Activated CD4-positive, alpha-beta T cell treated with anti-CD3 and anti-CD28 coated beads for 36 hours (primary cell): ENCODE measurements at regions of chr11 and their contacts with region 1.

Region 1: GRCh38 chr11:48001438-48002021 is 21.2 kb downstream of the PTPRJ start:
- DNase-seq: peak; percentile 90
- ATAC-seq: peak; percentile 86
- H3K4me3 Mint-ChIP-seq: peak overlapping the region; percentile 59
- H3K27ac Mint-ChIP-seq: peak overlapping the region; percentile 98
- H3K4me1 Mint-ChIP-seq: peaks cover 85% of the 10 kb centered on the region
- H3K27me3 Mint-ChIP-seq: no peaks in the 10 kb centered on the region

Region 2: GRCh38 chr11:46121724-46122477 is 1879.6 kb before region 1 on chr11:
- CTCF ChIA-PET with region 1: no interaction called
- POLR2A ChIA-PET with region 1: no interaction called
- intact Hi-C with region 1: loop called in 1 of 2 experiments (anchors 10 kb)
- DNase-seq: peak; percentile 83
- ATAC-seq: peak; percentile 39
- H3K4me3 Mint-ChIP-seq: peak overlapping the region; percentile 81
- H3K27ac Mint-ChIP-seq: peak overlapping the region; percentile 86
- H3K4me1 Mint-ChIP-seq: peaks cover 41% of the 10 kb centered on the region
- H3K27me3 Mint-ChIP-seq: no peaks in the 10 kb centered on the region

Region 3: DNA sequence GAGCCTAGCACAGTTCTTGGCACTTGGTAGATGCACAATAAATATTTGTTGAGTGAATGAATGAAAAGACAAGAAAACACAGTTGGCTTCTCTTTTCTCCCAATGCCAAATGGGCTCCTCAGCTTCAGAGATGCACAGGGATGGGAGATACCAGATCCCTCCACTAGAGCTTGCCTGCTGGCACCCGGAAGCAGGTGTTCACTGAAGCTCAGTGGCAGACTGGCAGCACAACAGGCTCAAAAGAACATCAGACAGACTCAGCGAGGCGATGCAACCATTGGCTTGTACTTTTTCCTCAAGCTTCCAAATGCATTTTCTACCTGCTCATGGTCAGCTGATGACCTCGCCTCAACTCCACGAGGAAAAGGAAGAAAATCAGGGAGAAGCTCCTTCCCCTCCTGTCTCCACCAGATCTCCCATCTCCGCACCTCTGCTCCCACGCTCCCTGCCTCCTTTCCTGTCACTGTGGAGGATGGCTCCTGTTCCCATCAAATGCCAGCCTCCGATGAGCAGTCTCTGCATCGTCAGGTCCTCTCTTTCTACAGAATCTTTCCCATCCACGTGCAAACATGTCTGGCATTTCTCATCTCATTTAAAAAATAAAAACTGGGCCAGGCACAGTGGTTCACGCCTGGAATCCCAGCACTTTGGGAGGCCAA is 558.4 kb before region 1 on chr11:
- CTCF ChIA-PET with region 1: no interaction called
- POLR2A ChIA-PET with region 1: no interaction called
- intact Hi-C with region 1: no loop called
- DNase-seq: no peak
- ATAC-seq: peak; percentile 53
- H3K4me3 Mint-ChIP-seq: no peak overlapping the region
- H3K27ac Mint-ChIP-seq: no peak overlapping the region
- H3K4me1 Mint-ChIP-seq: no peaks in the 10 kb centered on the region
- H3K27me3 Mint-ChIP-seq: no peaks in the 10 kb centered on the region

Region 4: GRCh38 chr11:47514825-47515647 is 486.5 kb before region 1 on chr11:
- CTCF ChIA-PET with region 1: no interaction called
- POLR2A ChIA-PET with region 1: no interaction called
- intact Hi-C with region 1: loop called in 1 of 2 experiments (anchors 10 kb)
- DNase-seq: peak; percentile 69
- ATAC-seq: peak; percentile 95
- H3K4me3 Mint-ChIP-seq: peak overlapping the region; percentile 0
- H3K27ac Mint-ChIP-seq: peak overlapping the region; percentile 84
- H3K4me1 Mint-ChIP-seq: peaks cover 89% of the 10 kb centered on the region
- H3K27me3 Mint-ChIP-seq: no peaks in the 10 kb centered on the region

Region 5: GRCh38 chr11:47672283-47672730 is 329.2 kb before region 1 on chr11:
- CTCF ChIA-PET with region 1: no interaction called
- POLR2A ChIA-PET with region 1: no interaction called
- intact Hi-C with region 1: no loop called
- DNase-seq: no peak
- ATAC-seq: no peak
- H3K4me3 Mint-ChIP-seq: no peak overlapping the region
- H3K27ac Mint-ChIP-seq: no peak overlapping the region
- H3K4me1 Mint-ChIP-seq: peaks cover 4% of the 10 kb centered on the region
- H3K27me3 Mint-ChIP-seq: no peaks in the 10 kb centered on the region

Region 6: GRCh38 chr11:47863189-47863892 is 138.2 kb before region 1 on chr11:
- CTCF ChIA-PET with region 1: no interaction called
- POLR2A ChIA-PET with region 1: no interaction called
- intact Hi-C with region 1: loop called in 1 of 2 experiments (anchors 2 kb)
- DNase-seq: no peak
- ATAC-seq: peak; percentile 56
- H3K4me3 Mint-ChIP-seq: no peak overlapping the region
- H3K27ac Mint-ChIP-seq: no peak overlapping the region
- H3K4me1 Mint-ChIP-seq: peaks cover 39% of the 10 kb centered on the region
- H3K27me3 Mint-ChIP-seq: no peaks in the 10 kb centered on the region

Region 7: DNA sequence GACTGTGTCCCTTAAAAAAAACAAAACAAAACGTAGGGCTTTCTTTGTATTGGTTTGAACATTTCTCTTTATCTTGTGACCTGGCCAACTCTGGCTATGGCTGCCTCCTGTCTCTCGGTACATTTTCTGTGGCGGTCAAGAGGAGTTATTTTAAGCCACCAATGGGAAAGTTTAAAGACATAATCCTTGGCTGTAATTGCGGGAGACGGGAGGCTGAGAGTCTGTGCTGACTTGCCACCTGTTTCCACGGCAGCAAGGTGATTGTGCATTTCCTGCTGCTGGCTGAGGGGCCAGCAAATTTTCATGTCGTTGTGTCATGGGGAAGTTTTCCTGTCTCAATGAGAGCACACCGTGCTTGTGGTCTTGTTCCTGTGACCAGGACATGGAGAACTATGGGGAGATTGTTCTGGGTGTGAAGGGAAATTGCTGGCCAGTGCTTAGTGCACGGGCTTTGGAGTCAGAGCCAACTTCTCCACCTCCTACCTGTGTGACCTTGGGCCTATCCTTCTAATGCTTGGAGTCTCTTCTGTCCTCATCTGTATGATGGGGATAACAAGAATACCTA is 10.2 kb before region 1 on chr11:
- CTCF ChIA-PET with region 1: interaction called, 7 read pairs
- POLR2A ChIA-PET with region 1: interaction called, 5 read pairs
- intact Hi-C with region 1: loop called in 1 of 2 experiments (anchors 1 kb)
- DNase-seq: peak; percentile 44
- ATAC-seq: peak; percentile 53
- H3K4me3 Mint-ChIP-seq: peak overlapping the region; percentile 34
- H3K27ac Mint-ChIP-seq: peak overlapping the region; percentile 40
- H3K4me1 Mint-ChIP-seq: peaks cover 53% of the 10 kb centered on the region
- H3K27me3 Mint-ChIP-seq: no peaks in the 10 kb centered on the region

Region 8: DNA sequence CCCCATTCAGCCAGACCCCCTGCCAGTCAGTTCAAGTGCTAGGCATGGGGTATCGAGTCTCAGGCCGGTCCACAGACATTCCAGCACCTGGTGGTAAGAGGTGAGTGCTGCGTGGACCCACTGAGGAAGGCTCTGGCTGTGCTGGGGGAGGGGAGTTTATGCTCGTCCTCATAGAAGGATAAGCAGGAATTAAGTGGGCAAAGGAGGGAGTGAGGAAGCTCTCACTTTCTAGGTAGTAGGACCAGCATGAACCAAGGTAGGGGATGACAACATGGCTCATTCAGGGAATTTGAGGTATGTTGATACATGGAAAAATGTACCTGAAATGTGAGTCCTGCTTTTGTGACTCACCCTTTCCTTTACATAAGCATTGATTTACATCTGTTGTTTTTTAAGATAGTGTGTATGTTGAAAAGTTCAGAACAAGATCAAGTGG is 95.5 kb after region 1 on chr11:
- CTCF ChIA-PET with region 1: interaction called, 6 read pairs
- POLR2A ChIA-PET with region 1: interaction called, 3 read pairs
- intact Hi-C with region 1: loop called in 1 of 2 experiments (anchors 1 kb)
- DNase-seq: no peak
- ATAC-seq: peak; percentile 47
- H3K4me3 Mint-ChIP-seq: no peak overlapping the region
- H3K27ac Mint-ChIP-seq: peak overlapping the region; percentile 79
- H3K4me1 Mint-ChIP-seq: peaks cover 65% of the 10 kb centered on the region
- H3K27me3 Mint-ChIP-seq: no peaks in the 10 kb centered on the region